ENCODE measurements at regions of chr18 and their contacts with region 1.

Region 1: DNA sequence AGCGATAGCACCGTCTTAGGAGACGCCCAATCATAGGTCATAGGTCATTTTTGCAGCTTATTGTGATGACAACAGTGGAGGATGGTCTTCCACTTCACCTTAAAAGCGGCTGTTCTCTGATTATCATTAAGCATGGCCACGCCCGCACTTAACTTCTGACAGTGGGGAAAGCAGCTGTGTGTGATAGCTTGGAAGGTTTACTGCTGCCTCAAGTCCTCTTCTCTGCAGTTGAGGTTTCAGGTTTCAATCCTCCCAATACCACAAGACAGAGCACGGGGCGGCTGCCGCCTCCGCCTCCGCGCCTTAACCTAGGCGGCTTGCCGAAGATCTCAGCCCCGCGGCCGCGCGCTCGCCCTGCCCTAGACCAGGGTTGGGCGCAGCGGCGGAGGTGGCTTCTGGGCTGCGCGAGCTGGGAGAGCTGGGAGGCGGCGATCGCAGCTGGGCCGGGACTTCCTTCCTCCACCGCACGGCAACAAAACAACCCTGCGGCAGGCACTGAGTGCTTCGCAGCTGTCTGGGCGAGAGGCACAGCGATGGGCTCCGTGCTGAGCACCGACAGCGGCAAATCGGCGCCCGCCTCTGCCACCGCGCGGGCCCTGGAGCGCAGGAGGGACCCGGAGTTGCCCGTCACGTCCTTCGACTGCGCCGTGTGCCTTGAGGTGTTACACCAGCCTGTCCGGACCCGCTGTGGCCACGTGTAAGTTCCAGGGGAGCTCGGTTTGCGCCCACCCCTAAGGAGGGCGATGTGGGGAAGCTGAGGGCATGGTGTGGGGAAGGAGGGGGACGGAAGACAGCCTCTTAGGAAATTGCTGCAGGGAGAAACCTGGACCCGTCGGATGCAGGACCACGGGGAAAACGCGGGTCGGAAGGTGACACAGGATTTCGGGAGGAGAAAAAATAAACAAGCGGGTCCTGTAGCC is at the start of gene RNF125:
- DNase-seq: peak; percentile 82 to 97 (median 91)
- ATAC-seq: peak; percentile 69
- H3K4me3 ChIP-seq: peak within 1 kb of the TSS; percentile 88 to 89
- H3K4me3 Mint-ChIP-seq: peak within 1 kb of the TSS; percentile 99
- H3K27ac ChIP-seq: peak within 1 kb of the TSS; percentile 83 to 99
- H3K27ac Mint-ChIP-seq: peak within 1 kb of the TSS; percentile 99
- H3K4me1 ChIP-seq: peaks cover 43% of the 10 kb centered on the region
- H3K4me1 Mint-ChIP-seq: peaks cover 60% of the 10 kb centered on the region
- H3K27me3 ChIP-seq: no peaks in the 10 kb centered on the region
- H3K27me3 Mint-ChIP-seq: no peaks in the 10 kb centered on the region
- CTCF ChIP-seq: no peak
- total RNA-seq, gene RNF125: 162 to 177 TPM

Region 2: GRCh38 chr18:30132958-30133357 is 1885.6 kb before region 1 on chr18:
- CTCF ChIA-PET with region 1: no interaction called
- POLR2A ChIA-PET with region 1: no interaction called
- intact Hi-C with region 1: no loop called
- DNase-seq: no peak
- ATAC-seq: no peak
- H3K4me3 ChIP-seq: no peak overlapping the region
- H3K4me3 Mint-ChIP-seq: no peak overlapping the region
- H3K27ac ChIP-seq: no peak overlapping the region
- H3K27ac Mint-ChIP-seq: no peak overlapping the region
- H3K4me1 ChIP-seq: no peaks in the 10 kb centered on the region
- H3K4me1 Mint-ChIP-seq: no peaks in the 10 kb centered on the region
- H3K27me3 ChIP-seq: no peaks in the 10 kb centered on the region
- H3K27me3 Mint-ChIP-seq: no peaks in the 10 kb centered on the region
- CTCF ChIP-seq: no peak

Region 3: GRCh38 chr18:31942999-31943865 is 75.4 kb before region 1 on chr18 and contains the start of gene TRAPPC8:
- CTCF ChIA-PET with region 1: interaction called, 15 read pairs
- POLR2A ChIA-PET with region 1: interaction called, 111 read pairs
- intact Hi-C with region 1: loop called (anchors 1 kb)
- DNase-seq: peak; percentile 80 to 97 (median 90)
- ATAC-seq: peak; percentile 87
- H3K4me3 ChIP-seq: peak within 1 kb of the TSS; percentile 97 to 98
- H3K4me3 Mint-ChIP-seq: peak within 1 kb of the TSS; percentile 99
- H3K27ac ChIP-seq: peak within 1 kb of the TSS; percentile 90 to 98
- H3K27ac Mint-ChIP-seq: peak within 1 kb of the TSS; percentile 98
- H3K4me1 ChIP-seq: peaks cover 25% of the 10 kb centered on the region
- H3K4me1 Mint-ChIP-seq: peaks cover 46% of the 10 kb centered on the region
- H3K27me3 ChIP-seq: no peaks in the 10 kb centered on the region
- H3K27me3 Mint-ChIP-seq: no peaks in the 10 kb centered on the region
- CTCF ChIP-seq: no peak
- total RNA-seq, gene TRAPPC8: 23.6 to 24.9 TPM

Region 4: GRCh38 chr18:31996007-31996406 is 22.6 kb before region 1 on chr18:
- CTCF ChIA-PET with region 1: no interaction called
- POLR2A ChIA-PET with region 1: interaction called, 12 read pairs
- intact Hi-C with region 1: no loop called
- DNase-seq: no peak
- ATAC-seq: no peak
- H3K4me3 ChIP-seq: no peak overlapping the region
- H3K4me3 Mint-ChIP-seq: no peak overlapping the region
- H3K27ac ChIP-seq: no peak overlapping the region
- H3K27ac Mint-ChIP-seq: no peak overlapping the region
- H3K4me1 ChIP-seq: no peaks in the 10 kb centered on the region
- H3K4me1 Mint-ChIP-seq: no peaks in the 10 kb centered on the region
- H3K27me3 ChIP-seq: no peaks in the 10 kb centered on the region
- H3K27me3 Mint-ChIP-seq: no peaks in the 10 kb centered on the region
- CTCF ChIP-seq: no peak

Region 5: DNA sequence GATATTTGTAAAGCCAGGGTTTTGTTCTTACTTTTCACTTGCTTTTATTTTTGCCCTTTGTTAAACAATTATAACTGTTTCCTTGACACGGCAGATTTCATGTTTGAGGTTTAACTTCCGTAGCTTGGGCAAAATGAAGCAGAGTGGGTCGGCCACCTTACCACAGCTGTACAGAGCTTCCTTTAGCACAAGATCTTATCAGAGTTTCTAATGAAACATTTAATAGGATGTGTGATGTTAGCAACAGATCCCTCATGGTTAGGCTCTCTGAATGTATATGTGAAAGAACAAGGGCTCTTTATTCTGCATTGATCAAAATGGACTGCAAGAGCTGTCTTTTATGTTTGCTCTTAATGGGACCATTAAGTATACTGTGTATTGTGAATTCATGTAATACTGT is 22.3 kb after region 1 on chr18:
- CTCF ChIA-PET with region 1: interaction called, 8 read pairs
- POLR2A ChIA-PET with region 1: interaction called, 62 read pairs
- intact Hi-C with region 1: loop called (anchors 1 to 2 kb)
- DNase-seq: peak in 8 of 9 experiments; percentile 27 to 86 (median 54)
- ATAC-seq: peak; percentile 79
- H3K4me3 ChIP-seq: peak overlapping the region in 1 of 2 experiments; percentile 9
- H3K4me3 Mint-ChIP-seq: peak overlapping the region; percentile 60
- H3K27ac ChIP-seq: peak overlapping the region in 1 of 2 experiments; percentile 55
- H3K27ac Mint-ChIP-seq: peak overlapping the region; percentile 68
- H3K4me1 ChIP-seq: peaks cover 44% of the 10 kb centered on the region
- H3K4me1 Mint-ChIP-seq: peaks cover 58% of the 10 kb centered on the region
- H3K27me3 ChIP-seq: no peaks in the 10 kb centered on the region
- H3K27me3 Mint-ChIP-seq: no peaks in the 10 kb centered on the region
- CTCF ChIP-seq: no peak

Region 6: GRCh38 chr18:32072321-32072720 is 53.7 kb after region 1 on chr18:
- CTCF ChIA-PET with region 1: interaction called, 36 read pairs
- POLR2A ChIA-PET with region 1: interaction called, 18 read pairs
- intact Hi-C with region 1: loop called (anchors 1 to 5 kb)
- DNase-seq: peak in 2 of 9 experiments; percentile 50 to 65
- ATAC-seq: peak; percentile 48
- H3K4me3 ChIP-seq: no peak overlapping the region
- H3K4me3 Mint-ChIP-seq: no peak overlapping the region
- H3K27ac ChIP-seq: no peak overlapping the region
- H3K27ac Mint-ChIP-seq: no peak overlapping the region
- H3K4me1 ChIP-seq: no peaks in the 10 kb centered on the region
- H3K4me1 Mint-ChIP-seq: peaks cover 17% of the 10 kb centered on the region
- H3K27me3 ChIP-seq: no peaks in the 10 kb centered on the region
- H3K27me3 Mint-ChIP-seq: no peaks in the 10 kb centered on the region
- CTCF ChIP-seq: peak; percentile 65

Region 7: DNA sequence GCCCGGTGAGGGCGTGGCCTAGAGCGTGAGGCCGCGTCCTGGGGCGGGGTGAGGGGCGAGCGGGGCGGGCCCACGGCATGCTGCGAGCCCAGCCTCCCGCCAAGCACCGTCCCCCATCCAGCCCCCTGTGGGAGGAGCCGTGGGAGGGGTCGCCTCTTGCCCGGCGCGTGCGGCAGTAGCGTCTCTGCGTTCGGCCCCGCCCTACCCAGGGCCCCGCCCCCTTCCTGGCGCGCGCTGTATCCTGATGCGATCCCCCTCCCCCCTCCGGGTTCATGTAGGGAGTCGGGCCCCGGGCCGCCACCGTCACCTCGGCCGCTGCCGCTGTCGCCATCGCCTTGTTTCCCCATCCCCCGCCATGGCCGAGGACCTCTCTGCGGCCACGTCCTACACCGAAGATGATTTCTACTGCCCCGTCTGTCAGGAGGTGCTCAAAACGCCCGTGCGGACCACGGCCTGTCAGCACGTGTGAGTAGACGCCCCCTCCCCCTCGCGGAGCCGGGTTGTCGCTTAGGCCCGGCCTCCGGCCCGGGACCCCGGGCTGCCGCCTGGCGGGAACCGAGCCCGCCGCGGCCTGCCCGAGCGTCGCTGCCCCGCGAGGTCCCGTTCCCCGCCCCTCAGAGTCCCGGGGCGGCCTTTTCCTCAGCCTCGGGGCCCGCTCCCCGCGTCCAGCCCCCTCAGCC is 74.0 kb after region 1 on chr18:
- CTCF ChIA-PET with region 1: interaction called, 8 read pairs
- POLR2A ChIA-PET with region 1: interaction called, 82 read pairs
- intact Hi-C with region 1: loop called (anchors 1 kb)
- DNase-seq: peak; percentile 99 to 100 (median 100)
- ATAC-seq: peak; percentile 90
- H3K4me3 ChIP-seq: peak overlapping the region; percentile 90 to 95
- H3K4me3 Mint-ChIP-seq: peak overlapping the region; percentile 99
- H3K27ac ChIP-seq: peak overlapping the region; percentile 94 to 99
- H3K27ac Mint-ChIP-seq: peak overlapping the region; percentile 98
- H3K4me1 ChIP-seq: peaks cover 33% of the 10 kb centered on the region
- H3K4me1 Mint-ChIP-seq: peaks cover 49% of the 10 kb centered on the region
- H3K27me3 ChIP-seq: no peaks in the 10 kb centered on the region
- H3K27me3 Mint-ChIP-seq: no peaks in the 10 kb centered on the region
- CTCF ChIP-seq: no peak

Region 8: GRCh38 chr18:32470713-32471633 is 452.4 kb after region 1 on chr18 and contains the start of gene GAREM1:
- CTCF ChIA-PET with region 1: no interaction called
- POLR2A ChIA-PET with region 1: no interaction called
- intact Hi-C with region 1: loop called in 1 of 2 experiments (anchors 5 kb)
- DNase-seq: peak; percentile 50 to 88 (median 77)
- ATAC-seq: peak; percentile 95
- H3K4me3 ChIP-seq: peak within 1 kb of the TSS; percentile 46 to 57
- H3K4me3 Mint-ChIP-seq: peak within 1 kb of the TSS; percentile 80
- H3K27ac ChIP-seq: no peak within 1 kb of the TSS
- H3K27ac Mint-ChIP-seq: no peak within 1 kb of the TSS
- H3K4me1 ChIP-seq: peaks cover 21% of the 10 kb centered on the region
- H3K4me1 Mint-ChIP-seq: peaks cover 28% of the 10 kb centered on the region
- H3K27me3 ChIP-seq: peaks cover 0 to 5% of the 10 kb centered on the region in 2 experiments
- H3K27me3 Mint-ChIP-seq: peaks cover 37% of the 10 kb centered on the region
- CTCF ChIP-seq: no peak
- total RNA-seq, gene GAREM1: 0.16 to 0.25 TPM